Left ventricle myocardium inferior (tissue), 1 donor: ENCODE measurements at regions of chr5 and their contacts with region 1.

Region 1: GRCh38 chr5:14270209-14270702 is 127.1 kb downstream of the TRIO start:
- DNase-seq: no peak
- H3K4me3 ChIP-seq: no peak overlapping the region
- H3K27ac ChIP-seq: peak overlapping the region; percentile 86
- H3K4me1 ChIP-seq: peaks cover 71% of the 10 kb centered on the region
- H3K27me3 ChIP-seq: no peaks in the 10 kb centered on the region
- CTCF ChIP-seq: peak; percentile 91

Region 2: GRCh38 chr5:14108170-14108996 is 161.9 kb before region 1 on chr5:
- intact Hi-C with region 1: loop called (anchors 2 kb)
- DNase-seq: peak; percentile 44
- H3K4me3 ChIP-seq: peak overlapping the region; percentile 52
- H3K27ac ChIP-seq: no peak overlapping the region
- H3K4me1 ChIP-seq: peaks cover 24% of the 10 kb centered on the region
- H3K27me3 ChIP-seq: no peaks in the 10 kb centered on the region
- CTCF ChIP-seq: peak; percentile 82

Region 3: DNA sequence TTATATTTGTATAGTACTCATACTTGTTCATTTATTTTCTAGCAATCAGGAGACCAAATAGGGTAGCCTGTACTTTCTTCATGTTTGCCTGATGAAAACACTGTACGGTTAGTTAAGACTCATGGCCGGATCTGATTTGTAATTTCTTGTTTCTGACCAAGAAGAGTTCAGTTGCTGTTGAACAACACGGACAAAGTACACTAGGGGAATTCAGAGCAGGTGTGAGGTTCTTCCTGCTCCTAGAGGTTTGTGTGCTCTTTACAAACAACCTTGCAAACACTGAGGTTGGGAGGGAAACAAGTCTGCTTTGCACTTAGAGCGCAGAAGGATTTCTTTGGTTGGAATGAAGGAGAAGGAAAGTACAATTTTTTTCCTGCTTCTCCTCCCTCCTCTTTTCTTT is 57.4 kb before region 1 on chr5:
- intact Hi-C with region 1: no loop called
- DNase-seq: no peak
- H3K4me3 ChIP-seq: no peak overlapping the region
- H3K27ac ChIP-seq: no peak overlapping the region
- H3K4me1 ChIP-seq: peaks cover 82% of the 10 kb centered on the region
- H3K27me3 ChIP-seq: no peaks in the 10 kb centered on the region
- CTCF ChIP-seq: no peak